ENCODE measurements at regions of chr1 and their contacts with region 1.

Region 1: DNA sequence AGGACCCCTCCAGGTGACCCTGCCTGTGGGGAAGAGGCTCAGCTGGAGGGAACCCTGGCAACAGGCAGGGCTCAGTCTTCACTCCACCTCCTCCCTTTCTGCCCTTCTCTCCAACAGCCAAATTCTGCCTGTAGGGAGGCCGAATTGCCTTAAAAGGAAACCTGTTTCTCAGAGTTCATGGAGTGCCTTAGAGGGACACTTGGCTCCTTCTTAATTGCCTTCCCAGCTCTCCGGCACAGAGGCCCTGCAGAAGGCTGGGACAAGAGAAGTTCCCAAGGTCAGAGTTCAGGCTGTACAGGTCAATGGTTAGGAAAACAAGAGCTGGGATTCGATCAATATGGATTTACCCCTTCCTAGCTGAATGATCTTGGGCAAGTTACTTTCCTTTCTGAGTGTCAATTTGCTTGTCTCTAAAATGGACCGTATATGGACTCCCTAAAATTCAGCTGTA is 6.2 kb downstream of the CSRP1 start:
- DNase-seq: no peak
- ATAC-seq: 0 out of 2 replicates have a peak, but pooled peaks have one; percentile 6
- H3K4me3 ChIP-seq: no peak overlapping the region
- H3K27ac ChIP-seq: peak overlapping the region; percentile 46; the same call in 1 of the 2 replicates
- H3K4me1 ChIP-seq: peaks cover 39% of the 10 kb centered on the region
- H3K27me3 ChIP-seq: no peaks in the 10 kb centered on the region
- CTCF ChIP-seq: no peak

Region 2: DNA sequence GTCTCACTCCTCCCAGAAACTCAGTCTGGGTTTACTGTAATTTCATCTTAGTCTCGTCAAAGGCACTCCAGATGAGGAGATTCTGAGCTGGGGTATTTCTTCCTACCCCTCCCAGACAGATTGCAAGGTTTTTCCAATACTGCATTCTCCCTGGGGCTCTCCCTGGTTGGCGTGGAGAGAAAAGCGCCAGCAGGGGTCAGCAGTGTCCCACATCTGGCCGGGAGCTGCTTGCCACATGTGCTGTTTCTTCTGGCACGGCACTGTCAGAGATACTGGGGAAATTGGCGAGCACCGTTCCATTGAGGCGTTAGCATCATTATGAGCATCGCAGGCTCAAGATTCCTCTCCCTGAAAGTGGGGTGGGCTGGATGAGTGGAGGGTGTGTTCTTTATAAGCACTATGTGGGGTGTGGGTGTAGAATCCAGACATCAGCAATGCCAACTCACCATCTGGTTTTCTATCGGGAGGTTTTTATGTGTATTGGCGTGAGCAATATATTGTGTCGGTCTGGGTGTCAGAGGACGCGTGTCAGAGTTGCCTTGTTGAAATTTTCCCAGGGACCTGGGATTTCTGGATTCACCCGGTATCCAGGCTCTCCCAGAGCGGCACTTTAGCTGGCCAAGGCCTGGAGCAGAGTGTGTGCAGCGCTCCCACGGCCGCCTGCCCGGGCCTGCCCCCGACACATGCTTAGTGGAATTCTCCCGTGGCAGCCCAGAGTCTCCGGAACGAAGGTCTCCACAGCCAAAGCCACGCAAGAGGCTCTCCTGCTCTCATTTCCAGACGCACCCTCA is 30.2 kb after region 1 on chr1:
- CTCF ChIA-PET with region 1: interaction called, 10 read pairs
- POLR2A ChIA-PET with region 1: no interaction called
- in situ Hi-C with region 1: no loop called
- intact Hi-C with region 1: no loop called
- DNase-seq: no peak
- ATAC-seq: peak; percentile 94
- H3K4me3 ChIP-seq: no peak overlapping the region
- H3K27ac ChIP-seq: no peak overlapping the region
- H3K4me1 ChIP-seq: peaks cover 11% of the 10 kb centered on the region
- H3K27me3 ChIP-seq: no peaks in the 10 kb centered on the region
- CTCF ChIP-seq: peak; percentile 93